Astrocyte of the cerebellum (primary cell): ENCODE measurements at regions of chr13 and their contacts with region 1.

Region 1: DNA sequence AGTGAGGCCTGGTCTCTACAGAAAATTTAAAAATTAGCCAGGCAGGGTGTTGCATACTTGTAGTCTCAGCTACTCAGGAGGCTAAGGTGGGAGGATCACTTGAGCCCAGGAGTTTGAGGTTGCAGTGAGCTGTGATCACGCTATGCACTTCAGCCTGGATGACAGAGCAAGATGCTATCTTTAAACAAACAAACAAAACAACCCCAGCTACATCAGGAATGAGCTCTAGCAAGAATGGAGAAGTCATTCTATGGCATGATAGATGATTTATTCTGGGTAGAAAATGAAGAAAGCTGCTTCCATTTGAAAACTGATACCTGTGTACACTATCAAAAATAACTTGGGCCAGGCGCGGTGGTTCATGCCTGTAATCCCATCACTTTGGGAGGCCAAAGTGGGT is 15.8 kb upstream of the SHISA2 start:
- DNase-seq: no peak
- H3K4me3 ChIP-seq: no peak overlapping the region
- CTCF ChIP-seq: no peak

Region 2: DNA sequence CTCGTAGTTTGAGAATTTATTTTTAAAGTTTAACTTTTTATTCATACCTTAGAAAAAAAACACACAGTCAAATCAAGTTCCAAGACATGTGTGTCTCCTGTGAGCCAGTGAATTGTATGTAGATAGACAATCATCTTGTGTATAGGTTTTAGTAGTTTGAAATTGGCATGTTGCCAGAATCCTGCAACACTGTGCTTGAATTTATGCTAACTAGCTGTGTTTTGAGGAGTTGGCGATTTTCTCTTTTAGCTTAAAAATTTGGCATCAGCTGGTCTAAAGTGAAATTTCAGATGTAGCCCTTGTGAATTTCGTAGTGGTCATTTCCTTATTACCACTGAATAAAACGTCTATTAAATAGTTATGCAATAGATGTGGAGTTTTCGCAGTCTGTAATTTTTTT is 482.6 kb before region 1 on chr13:
- in situ Hi-C with region 1: loop called (anchors 5 kb)
- DNase-seq: no peak
- H3K4me3 ChIP-seq: no peak overlapping the region
- CTCF ChIP-seq: no peak

Region 3: DNA sequence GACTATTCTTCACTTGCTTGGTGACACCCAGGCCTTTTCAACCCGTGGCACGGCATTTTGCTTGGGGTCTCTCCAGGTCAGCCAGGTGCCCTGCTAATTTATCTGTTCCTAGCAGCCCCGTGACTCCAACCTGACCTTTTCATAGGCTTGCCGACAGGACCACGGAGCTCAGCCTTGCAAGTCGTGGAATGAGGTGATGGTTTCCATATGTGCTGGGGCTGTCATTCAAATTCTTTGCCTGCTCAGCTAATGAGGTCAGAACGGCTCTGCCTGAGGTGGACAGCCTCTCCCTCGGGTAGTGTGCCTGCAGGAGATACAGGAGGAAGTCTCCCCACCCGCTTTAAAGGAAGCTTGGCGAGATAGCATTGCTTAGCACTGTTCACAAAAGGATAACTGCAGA is 76.8 kb before region 1 on chr13:
- in situ Hi-C with region 1: no loop called
- DNase-seq: no peak
- H3K4me3 ChIP-seq: no peak overlapping the region
- CTCF ChIP-seq: no peak